Activated CD4-positive, alpha-beta T cell treated with anti-CD3 and anti-CD28 coated beads for 36 hours (primary cell): ENCODE measurements at regions of chr10 and their contacts with region 1.

Region 1: GRCh38 chr10:106711313-106711906 is 453.1 kb downstream of the SORCS1 start:
- DNase-seq: peak; percentile 72
- ATAC-seq: no peak
- H3K4me3 Mint-ChIP-seq: no peak overlapping the region
- H3K27ac Mint-ChIP-seq: no peak overlapping the region
- H3K4me1 Mint-ChIP-seq: no peaks in the 10 kb centered on the region
- H3K27me3 Mint-ChIP-seq: peaks cover 2% of the 10 kb centered on the region

Region 2: DNA sequence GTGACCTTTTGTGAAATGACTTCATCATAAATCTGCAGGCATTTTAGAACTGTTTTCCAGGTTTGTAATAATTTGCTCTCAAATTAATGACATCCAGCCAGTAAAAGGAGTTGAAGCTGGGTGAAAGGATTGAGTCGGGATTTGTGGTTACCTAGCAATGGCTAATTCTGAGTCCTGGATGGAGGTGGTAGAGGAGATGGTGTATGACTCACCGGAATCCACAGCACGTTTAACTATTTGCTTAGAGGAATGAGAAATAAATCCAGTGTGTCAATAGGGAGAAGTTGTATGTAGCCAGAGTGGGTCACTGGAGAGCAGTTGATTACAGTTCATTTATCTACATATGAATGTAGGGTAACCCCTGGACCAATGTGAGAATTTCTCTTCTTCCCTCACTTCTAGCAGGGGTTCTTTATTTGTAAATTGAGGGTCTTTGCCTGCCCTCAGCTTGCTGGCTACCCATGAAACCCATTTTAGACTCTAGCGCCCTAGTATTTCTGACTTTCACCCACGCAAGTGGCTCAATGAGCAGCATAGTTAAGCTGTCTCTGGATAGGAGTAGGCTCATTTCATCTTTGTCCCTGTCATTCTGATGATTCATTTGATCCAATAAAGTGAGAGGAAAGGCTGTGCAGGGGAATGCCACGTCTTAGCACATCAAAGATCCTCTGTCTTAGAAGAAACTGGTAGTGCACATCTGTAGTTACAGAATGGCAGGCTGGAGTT is 1522.5 kb before region 1 on chr10:
- CTCF ChIA-PET with region 1: no interaction called
- POLR2A ChIA-PET with region 1: no interaction called
- intact Hi-C with region 1: no loop called
- DNase-seq: no peak
- ATAC-seq: no peak
- H3K4me3 Mint-ChIP-seq: no peak overlapping the region
- H3K27ac Mint-ChIP-seq: no peak overlapping the region
- H3K4me1 Mint-ChIP-seq: no peaks in the 10 kb centered on the region
- H3K27me3 Mint-ChIP-seq: no peaks in the 10 kb centered on the region

Region 3: DNA sequence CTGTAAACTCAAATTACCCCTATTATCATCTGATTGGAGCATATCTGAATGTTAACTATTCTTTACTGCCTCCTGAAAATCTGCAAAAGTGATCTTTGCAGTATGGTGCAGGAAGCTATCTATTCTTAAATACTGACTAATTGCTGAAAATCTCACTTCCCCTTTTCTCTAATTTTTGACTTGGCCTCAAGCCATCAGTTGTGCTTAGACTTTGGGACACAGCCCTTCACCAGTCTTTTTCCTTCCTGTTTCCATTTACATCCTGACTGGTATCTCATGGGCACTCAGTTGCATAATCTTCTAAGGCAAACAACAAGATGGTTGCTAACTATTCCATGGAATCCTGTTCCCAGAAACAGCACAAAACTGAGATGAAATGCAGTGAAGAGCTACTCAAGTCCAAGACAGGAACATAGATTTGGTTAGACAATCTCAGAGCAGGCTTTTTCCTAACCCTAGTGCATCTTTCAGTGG is 224.6 kb after region 1 on chr10:
- CTCF ChIA-PET with region 1: no interaction called
- POLR2A ChIA-PET with region 1: no interaction called
- intact Hi-C with region 1: no loop called
- DNase-seq: no peak
- ATAC-seq: no peak
- H3K4me3 Mint-ChIP-seq: no peak overlapping the region
- H3K27ac Mint-ChIP-seq: no peak overlapping the region
- H3K4me1 Mint-ChIP-seq: no peaks in the 10 kb centered on the region
- H3K27me3 Mint-ChIP-seq: no peaks in the 10 kb centered on the region

Region 4: DNA sequence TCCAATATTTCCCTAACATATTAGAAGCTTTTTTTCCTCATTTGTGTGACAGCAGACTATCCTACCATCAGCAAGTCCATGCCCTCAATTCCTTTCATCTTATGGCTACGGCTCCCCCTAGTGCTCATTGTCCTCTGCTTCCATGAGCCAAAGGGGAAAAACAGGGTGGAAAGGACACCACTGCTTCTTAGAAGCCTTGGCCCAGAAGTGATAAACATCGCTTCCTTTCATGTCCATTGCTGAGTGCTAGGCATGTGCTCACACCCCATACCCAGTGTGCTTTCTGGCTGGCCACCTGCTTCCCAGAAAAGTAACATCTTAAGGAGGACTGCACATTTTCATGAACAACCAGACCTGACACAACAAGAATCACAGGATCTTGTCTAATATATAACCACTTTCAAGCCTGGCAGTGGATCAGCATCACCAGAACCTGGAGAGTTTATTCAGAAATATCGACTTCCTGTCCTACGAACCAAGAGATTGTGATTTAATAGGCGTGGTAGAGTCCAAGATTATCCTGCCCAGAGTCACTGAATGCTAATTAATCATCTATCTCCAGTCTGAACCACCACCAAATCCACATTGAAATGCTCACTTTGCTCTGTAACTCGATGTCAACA is 1103.6 kb after region 1 on chr10:
- CTCF ChIA-PET with region 1: no interaction called
- POLR2A ChIA-PET with region 1: no interaction called
- intact Hi-C with region 1: loop called in 1 of 2 experiments (anchors 10 kb)
- DNase-seq: peak; percentile 10
- ATAC-seq: no peak
- H3K4me3 Mint-ChIP-seq: no peak overlapping the region
- H3K27ac Mint-ChIP-seq: no peak overlapping the region
- H3K4me1 Mint-ChIP-seq: no peaks in the 10 kb centered on the region
- H3K27me3 Mint-ChIP-seq: no peaks in the 10 kb centered on the region